ENCODE measurements at regions of chr1 and their contacts with region 1.

Region 1: GRCh38 chr1:192086644-192087043 is 71.6 kb upstream of the RGS18 start:
- DNase-seq: no peak
- ATAC-seq: no peak
- H3K4me3 ChIP-seq: no peak overlapping the region
- H3K27ac ChIP-seq: no peak overlapping the region
- H3K4me1 ChIP-seq: no peaks in the 10 kb centered on the region
- H3K27me3 ChIP-seq: no peaks in the 10 kb centered on the region
- CTCF ChIP-seq: no peak

Region 2: GRCh38 chr1:191818198-191818597 is 268.4 kb before region 1 on chr1:
- intact Hi-C with region 1: no loop called
- DNase-seq: no peak
- ATAC-seq: no peak
- H3K4me3 ChIP-seq: no peak overlapping the region
- H3K27ac ChIP-seq: no peak overlapping the region
- H3K4me1 ChIP-seq: no peaks in the 10 kb centered on the region
- H3K27me3 ChIP-seq: no peaks in the 10 kb centered on the region
- CTCF ChIP-seq: no peak

Region 3: GRCh38 chr1:191938701-191939100 is 147.9 kb before region 1 on chr1:
- intact Hi-C with region 1: no loop called
- DNase-seq: no peak
- ATAC-seq: no peak
- H3K4me3 ChIP-seq: no peak overlapping the region
- H3K27ac ChIP-seq: no peak overlapping the region
- H3K4me1 ChIP-seq: no peaks in the 10 kb centered on the region
- H3K27me3 ChIP-seq: no peaks in the 10 kb centered on the region
- CTCF ChIP-seq: no peak

Region 4: GRCh38 chr1:193392686-193393085 is 1306.0 kb after region 1 on chr1:
- intact Hi-C with region 1: loop called in 1 of 10 experiments (anchors 5 kb)
- DNase-seq: no peak
- ATAC-seq: no peak
- H3K4me3 ChIP-seq: no peak overlapping the region
- H3K27ac ChIP-seq: no peak overlapping the region
- H3K4me1 ChIP-seq: peaks cover 0 to 10% (median 0%) of the 10 kb centered on the region in 9 donors
- H3K27me3 ChIP-seq: no peaks in the 10 kb centered on the region
- CTCF ChIP-seq: no peak